Right ventricle myocardium superior (tissue), 1 donor: ENCODE measurements at regions of chr3 and their contacts with region 1.

Region 1: GRCh38 chr3:149480325-149481017 is 6.0 kb downstream of the TM4SF4 start:
- DNase-seq: peak; percentile 85
- ATAC-seq: peak; percentile 97

Region 2: GRCh38 chr3:149356044-149356592 is 124.4 kb before region 1 on chr3:
- intact Hi-C with region 1: loop called (anchors 5 kb)
- DNase-seq: no peak
- ATAC-seq: peak; percentile 61

Region 3: DNA sequence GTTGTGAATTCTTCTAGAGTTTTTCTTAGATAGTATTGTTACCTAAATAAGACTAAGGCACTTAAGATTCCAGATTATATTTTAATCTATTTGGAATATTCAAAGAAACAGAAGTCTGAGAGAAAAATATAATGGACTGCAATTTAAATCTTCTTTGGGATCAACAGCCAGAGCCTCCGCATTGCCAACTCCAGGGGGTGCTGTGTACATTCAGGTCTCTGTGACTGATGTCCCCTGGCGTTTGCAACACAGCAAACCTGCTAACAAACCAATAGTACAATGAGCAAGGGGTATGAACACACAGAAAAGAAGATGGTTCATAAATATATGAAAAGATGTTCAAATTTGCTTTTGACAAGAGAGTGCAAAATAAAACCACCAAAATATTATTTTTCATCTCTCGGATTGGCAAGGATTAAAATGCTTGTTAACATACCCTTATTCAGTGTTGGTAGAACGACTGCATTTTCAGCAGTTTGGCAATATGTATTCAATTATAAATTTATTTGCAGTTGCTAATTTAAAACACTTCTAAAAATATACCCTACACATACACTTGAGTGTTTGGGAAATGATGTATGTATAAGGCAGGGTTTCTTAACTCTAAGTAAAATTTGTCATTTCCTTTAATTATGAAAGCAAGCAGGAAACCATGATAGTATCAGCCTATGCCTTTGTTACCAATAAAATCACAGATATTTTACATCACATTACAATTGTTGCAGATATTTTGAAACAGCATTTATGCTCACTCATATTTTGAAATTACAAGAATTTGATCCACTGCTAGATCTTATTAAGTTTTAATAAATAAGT is 86.9 kb before region 1 on chr3:
- intact Hi-C with region 1: loop called (anchors 5 kb)
- DNase-seq: peak; percentile 80
- ATAC-seq: peak; percentile 82

Region 4: GRCh38 chr3:149442851-149443544 is 37.5 kb before region 1 on chr3:
- intact Hi-C with region 1: no loop called
- DNase-seq: no peak
- ATAC-seq: no peak

Region 5: GRCh38 chr3:149523512-149524299 is 43.2 kb after region 1 on chr3:
- intact Hi-C with region 1: no loop called
- DNase-seq: no peak
- ATAC-seq: no peak

Region 6: DNA sequence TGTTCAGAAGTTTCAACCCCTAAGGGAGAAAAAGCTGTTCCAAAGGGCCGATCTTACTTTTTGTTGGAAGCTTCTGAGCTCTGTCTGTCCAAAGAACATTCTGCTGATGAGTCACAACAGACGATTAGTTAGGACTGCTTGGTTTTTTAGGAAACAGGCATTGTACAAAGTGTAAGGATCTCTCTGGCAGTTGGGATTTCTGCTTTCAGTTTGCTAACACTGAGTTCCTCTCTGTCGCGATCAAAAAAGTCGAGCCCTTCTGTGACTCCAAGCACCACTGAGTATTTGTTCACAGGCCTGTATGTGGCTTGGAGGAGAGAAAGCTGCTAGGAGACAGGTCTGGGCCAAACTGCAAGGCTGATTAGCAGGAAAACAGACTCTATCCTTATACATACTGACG is 582.0 kb after region 1 on chr3:
- intact Hi-C with region 1: no loop called
- DNase-seq: no peak
- ATAC-seq: peak; percentile 74